Mammary epithelial cell (primary cell): ENCODE measurements at regions of chr2 and their contacts with region 1.

Region 1: DNA sequence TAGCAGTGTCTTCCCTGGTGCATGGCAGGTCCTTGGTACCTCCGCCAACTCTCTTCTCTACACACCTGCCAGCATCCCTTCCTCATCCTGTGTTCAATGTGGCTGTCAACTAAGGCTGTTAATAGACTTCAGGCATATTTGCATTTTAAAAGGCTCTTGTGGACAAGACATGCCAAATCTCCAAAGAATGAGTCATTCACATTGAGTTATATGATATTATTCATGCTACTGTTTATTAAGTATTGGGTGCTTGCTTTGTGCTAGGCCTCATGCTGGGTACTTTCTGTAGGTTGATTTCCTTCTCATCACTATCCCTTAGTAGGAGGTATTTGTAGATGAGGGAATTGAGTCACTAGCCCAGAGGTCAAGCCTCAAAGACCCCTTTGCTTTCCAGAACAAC is 5.2 kb downstream of the MYO1B start:
- DNase-seq: peak; percentile 40
- H3K4me3 ChIP-seq: no peak overlapping the region
- H3K27ac ChIP-seq: no peak overlapping the region
- H3K4me1 ChIP-seq: peaks cover 42% of the 10 kb centered on the region
- H3K27me3 ChIP-seq: no peaks in the 10 kb centered on the region
- CTCF ChIP-seq: no peak

Region 2: DNA sequence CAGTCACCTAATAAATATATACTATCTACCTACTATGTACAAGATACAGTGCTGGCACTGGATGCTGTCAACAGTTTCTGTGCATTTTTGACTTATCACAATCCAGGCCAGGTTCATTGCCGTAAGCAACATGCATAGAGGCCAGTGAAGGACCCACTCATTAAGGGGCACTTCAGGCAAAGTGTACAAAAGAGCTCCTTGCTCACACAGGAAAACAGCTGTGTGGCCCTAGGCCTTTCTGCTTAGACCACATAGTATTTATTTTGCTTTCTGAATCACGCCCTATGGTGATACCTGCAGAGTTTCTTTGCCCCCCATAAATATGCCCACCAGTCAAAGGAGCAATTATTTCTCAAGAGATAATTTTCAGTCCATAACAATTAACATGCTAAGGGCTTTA is 60.0 kb before region 1 on chr2:
- CTCF ChIA-PET with region 1: no interaction called
- dilution Hi-C with region 1: loop called (anchors 5 kb)
- in situ Hi-C with region 1: no loop called
- intact Hi-C with region 1: no loop called
- DNase-seq: no peak
- H3K4me3 ChIP-seq: no peak overlapping the region
- H3K27ac ChIP-seq: no peak overlapping the region
- H3K4me1 ChIP-seq: peaks cover 25% of the 10 kb centered on the region
- H3K27me3 ChIP-seq: no peaks in the 10 kb centered on the region
- CTCF ChIP-seq: no peak